Cardiac septum (tissue), 1 donor: ENCODE measurements at regions of chr7 and their contacts with region 1.

Region 1: GRCh38 chr7:150340024-150340749 is 1.2 kb downstream of the RARRES2 start:
- DNase-seq: no peak

Region 2: DNA sequence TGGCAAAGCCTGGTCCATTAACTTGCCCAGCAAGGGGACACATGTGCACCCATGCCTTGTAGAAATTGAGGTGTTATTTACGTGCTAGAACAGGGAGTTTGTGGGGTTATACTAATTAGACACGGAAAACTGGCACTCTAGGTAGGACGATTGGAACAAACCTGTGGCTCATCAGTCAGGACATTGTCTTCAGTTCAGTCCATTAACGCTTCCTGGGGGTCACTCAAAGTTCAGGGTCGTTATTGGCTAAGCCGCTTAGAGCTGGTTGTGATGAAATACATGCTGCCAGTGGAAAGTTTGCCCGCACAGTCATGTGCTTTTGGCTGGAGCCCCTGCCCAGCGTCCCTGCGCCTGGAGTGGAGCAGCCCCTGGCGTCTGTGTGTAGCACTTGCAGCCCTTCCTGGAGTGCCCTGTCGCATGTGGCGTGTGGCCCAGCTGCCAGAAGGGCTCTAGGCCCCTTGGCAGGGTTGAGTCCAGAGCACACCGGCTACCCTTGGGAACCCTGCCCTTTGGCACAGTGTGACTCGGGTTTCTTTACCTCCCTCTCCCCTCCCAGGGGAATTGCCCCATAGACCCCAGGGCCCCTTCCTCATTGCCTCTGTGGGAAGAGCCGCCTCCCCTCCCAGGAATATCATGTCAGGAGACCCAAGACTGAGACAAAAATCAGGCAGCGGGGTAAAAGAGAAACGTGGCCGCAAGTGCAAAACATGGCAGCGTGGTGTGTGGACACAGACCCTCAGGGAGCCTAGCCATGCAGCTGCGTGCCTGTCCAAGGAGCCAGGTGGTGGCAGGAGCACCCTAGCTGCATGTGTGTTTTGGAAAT is 48.7 kb after region 1 on chr7:
- intact Hi-C with region 1: loop called (anchors 5 kb)
- DNase-seq: no peak